Natural killer cell (primary cell): ENCODE measurements at regions of chr1 and their contacts with region 1.

Region 1: GRCh38 chr1:107750358-107750959 is 214.5 kb downstream of the VAV3 start:
- DNase-seq: peak; percentile 22 to 37
- ATAC-seq: peak in 2 of 3 donors; percentile 26 to 44
- H3K4me3 ChIP-seq: no peak overlapping the region
- H3K4me3 Mint-ChIP-seq: no peak overlapping the region
- H3K27ac ChIP-seq: no peak overlapping the region
- H3K27ac Mint-ChIP-seq: no peak overlapping the region
- H3K4me1 ChIP-seq: no peaks in the 10 kb centered on the region
- H3K4me1 Mint-ChIP-seq: peaks cover 0 to 10% of the 10 kb centered on the region in 2 donors
- H3K27me3 ChIP-seq: no peaks in the 10 kb centered on the region
- H3K27me3 Mint-ChIP-seq: no peaks in the 10 kb centered on the region
- CTCF ChIP-seq: peak; percentile 61

Region 2: DNA sequence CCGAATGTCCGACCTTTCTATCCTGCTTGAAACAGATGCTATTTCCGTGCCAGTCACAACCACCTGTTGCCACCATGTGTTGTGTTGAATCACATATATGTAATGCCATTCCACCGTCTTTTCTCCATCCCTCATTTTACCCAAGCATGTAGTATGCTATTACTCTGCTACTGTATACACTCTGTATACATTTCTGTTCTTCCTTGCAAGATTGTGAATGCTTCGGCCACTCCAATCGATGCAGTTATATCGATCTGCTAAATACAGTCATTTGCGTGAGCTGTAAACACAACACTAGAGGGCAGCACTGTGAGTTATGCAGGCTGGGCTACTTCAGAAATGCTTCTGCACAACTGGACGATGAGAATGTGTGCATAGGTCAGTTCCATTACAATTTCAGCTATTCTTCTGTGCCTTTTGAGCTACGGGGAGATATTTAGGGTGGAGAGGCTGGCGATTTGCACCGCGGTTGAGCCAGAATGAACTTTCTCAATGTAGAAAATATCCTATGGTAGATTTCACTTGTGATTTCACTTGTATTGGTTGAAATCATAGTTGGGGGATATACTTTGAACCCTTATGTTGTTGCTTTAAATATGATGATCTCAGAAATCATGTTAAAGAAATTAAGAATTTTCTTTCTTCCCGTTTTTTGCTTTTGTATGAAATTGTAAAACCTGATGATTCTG is 319.8 kb before region 1 on chr1:
- intact Hi-C with region 1: loop called (anchors 1 kb)
- DNase-seq: peak in 1 of 2 donors; percentile 20
- ATAC-seq: peak in 1 of 3 donors; percentile 48
- H3K4me3 ChIP-seq: no peak overlapping the region
- H3K4me3 Mint-ChIP-seq: no peak overlapping the region
- H3K27ac ChIP-seq: no peak overlapping the region
- H3K27ac Mint-ChIP-seq: no peak overlapping the region
- H3K4me1 ChIP-seq: no peaks in the 10 kb centered on the region
- H3K4me1 Mint-ChIP-seq: peaks cover 0 to 5% of the 10 kb centered on the region in 2 donors
- H3K27me3 ChIP-seq: no peaks in the 10 kb centered on the region
- H3K27me3 Mint-ChIP-seq: peaks cover 7 to 22% of the 10 kb centered on the region in 2 donors
- CTCF ChIP-seq: peak; percentile 62

Region 3: DNA sequence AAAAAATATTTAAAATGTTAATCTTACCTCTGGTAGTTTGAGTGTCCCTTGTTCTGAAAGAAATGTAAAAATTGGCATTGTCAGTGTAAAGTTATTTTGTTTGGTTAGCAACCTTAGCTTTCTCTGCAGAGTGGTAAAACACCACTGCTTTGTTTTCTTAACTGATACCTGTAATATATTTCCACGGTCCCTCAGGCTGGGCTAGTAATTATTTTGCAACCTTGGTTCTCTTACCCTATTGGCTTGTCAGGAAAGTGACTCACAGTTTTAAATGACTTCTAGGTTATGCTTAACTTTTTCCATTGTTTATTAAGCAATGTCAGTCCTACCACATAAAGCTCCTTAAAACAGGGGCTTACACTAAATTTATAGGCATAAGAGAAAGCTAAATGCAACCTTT is 62.1 kb before region 1 on chr1:
- intact Hi-C with region 1: no loop called
- DNase-seq: no peak
- ATAC-seq: no peak
- H3K4me3 ChIP-seq: no peak overlapping the region
- H3K4me3 Mint-ChIP-seq: no peak overlapping the region
- H3K27ac ChIP-seq: no peak overlapping the region
- H3K27ac Mint-ChIP-seq: no peak overlapping the region
- H3K4me1 ChIP-seq: no peaks in the 10 kb centered on the region
- H3K4me1 Mint-ChIP-seq: peaks cover 17 to 28% of the 10 kb centered on the region in 2 donors
- H3K27me3 ChIP-seq: no peaks in the 10 kb centered on the region
- H3K27me3 Mint-ChIP-seq: no peaks in the 10 kb centered on the region
- CTCF ChIP-seq: no peak

Region 4: GRCh38 chr1:107727882-107728281 is 22.6 kb before region 1 on chr1:
- intact Hi-C with region 1: no loop called
- DNase-seq: no peak
- ATAC-seq: no peak
- H3K4me3 ChIP-seq: no peak overlapping the region
- H3K4me3 Mint-ChIP-seq: no peak overlapping the region
- H3K27ac ChIP-seq: no peak overlapping the region
- H3K27ac Mint-ChIP-seq: no peak overlapping the region
- H3K4me1 ChIP-seq: no peaks in the 10 kb centered on the region
- H3K4me1 Mint-ChIP-seq: peaks cover 24 to 28% of the 10 kb centered on the region in 2 donors
- H3K27me3 ChIP-seq: no peaks in the 10 kb centered on the region
- H3K27me3 Mint-ChIP-seq: no peaks in the 10 kb centered on the region
- CTCF ChIP-seq: no peak